ENCODE measurements at regions of chr2 and their contacts with region 1.

Region 1: GRCh38 chr2:240851078-240851991 is 17.3 kb upstream of the AGXT start:
- DNase-seq: peak; percentile 94
- ATAC-seq: peak; percentile 99
- H3K4me3 Mint-ChIP-seq: no peak overlapping the region
- H3K27ac Mint-ChIP-seq: 0 out of 2 replicates have a peak overlapping the region, but pooled peaks have one; percentile 53
- H3K4me1 Mint-ChIP-seq: peaks cover 10% of the 10 kb centered on the region
- H3K27me3 Mint-ChIP-seq: no peaks in the 10 kb centered on the region; the same call in none of the 2 replicates
- CTCF ChIP-seq: peak; percentile 89

Region 2: DNA sequence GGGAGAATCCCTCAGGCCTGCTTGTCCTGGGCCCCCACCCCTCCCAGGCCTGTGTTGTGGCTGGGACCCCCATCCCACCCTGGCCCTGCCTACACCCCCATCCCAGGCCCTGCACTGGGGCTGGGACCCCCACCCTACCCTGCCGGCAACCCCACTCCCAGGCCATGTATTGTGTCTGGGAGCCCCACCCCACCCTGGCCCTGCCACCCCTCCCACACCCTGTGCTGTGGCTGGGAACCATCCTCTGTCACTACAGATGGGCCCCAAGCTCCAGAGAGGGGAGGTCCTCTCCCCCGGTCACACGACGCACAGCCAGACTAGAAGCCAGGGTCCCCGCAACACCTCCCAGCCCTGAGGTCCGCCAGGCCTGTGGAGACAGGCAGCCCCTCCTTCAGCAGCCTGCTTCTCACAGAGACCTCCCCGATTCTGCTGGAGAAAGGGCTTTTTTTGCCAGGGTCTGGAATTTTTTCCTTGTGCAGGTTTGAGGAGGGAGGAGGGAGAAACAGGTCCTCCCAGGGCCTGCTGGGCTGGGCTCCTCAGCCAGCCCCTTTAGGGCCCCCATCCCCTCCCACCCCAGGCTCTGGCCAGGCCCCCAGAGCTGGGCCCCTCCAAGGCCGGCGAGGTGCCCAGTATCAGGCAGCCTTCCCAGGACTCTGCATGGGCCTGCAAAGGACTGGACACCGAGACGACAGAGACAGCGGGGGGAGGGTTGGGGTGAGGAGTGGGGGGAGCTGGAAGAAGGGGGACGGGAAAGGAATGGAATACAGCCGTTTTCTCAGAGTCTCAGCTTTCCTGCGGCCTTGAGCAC is 59.3 kb before region 1 on chr2:
- CTCF ChIA-PET with region 1: no interaction called
- POLR2A ChIA-PET with region 1: no interaction called
- DNase-seq: no peak
- ATAC-seq: no peak
- H3K4me3 Mint-ChIP-seq: no peak overlapping the region
- H3K27ac Mint-ChIP-seq: peak overlapping the region; percentile 88; the same call in 1 of the 2 replicates
- H3K4me1 Mint-ChIP-seq: peaks cover 13% of the 10 kb centered on the region
- H3K27me3 Mint-ChIP-seq: no peaks in the 10 kb centered on the region
- CTCF ChIP-seq: no peak

Region 3: DNA sequence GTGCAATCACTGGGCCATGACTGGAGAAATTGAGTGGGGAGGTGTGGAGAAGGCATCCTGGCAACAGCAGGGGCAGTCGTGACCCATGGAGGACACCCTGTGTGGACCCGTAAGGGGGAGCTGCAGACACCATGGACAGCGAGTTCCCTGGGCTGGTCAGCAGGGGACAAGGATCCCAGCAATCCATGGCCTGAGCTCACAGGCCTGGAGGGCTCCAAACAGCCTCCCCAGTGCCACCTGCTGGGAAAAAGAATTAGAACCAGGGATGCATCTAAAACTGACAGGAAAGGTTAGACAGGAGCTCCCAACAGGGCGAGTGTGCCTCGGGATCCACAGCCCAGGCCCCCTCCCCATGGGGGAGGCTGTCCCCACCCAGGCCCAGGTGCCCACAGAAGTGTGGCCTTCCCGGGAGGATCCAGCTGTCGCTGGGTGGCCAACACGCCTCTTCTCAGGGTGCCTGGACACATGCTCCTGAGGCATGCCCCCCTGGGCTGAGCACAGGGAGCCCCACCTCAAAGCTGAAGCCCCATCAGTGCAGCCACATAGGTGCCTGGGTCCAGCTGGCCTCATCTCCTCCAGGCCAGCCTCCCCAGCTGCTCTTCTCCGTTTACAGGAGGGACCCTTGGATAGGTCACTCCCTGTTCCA is 10.8 kb before region 1 on chr2:
- CTCF ChIA-PET with region 1: interaction called, 31 read pairs
- POLR2A ChIA-PET with region 1: no interaction called
- DNase-seq: peak; percentile 68
- ATAC-seq: peak; percentile 84
- H3K4me3 Mint-ChIP-seq: no peak overlapping the region
- H3K27ac Mint-ChIP-seq: no peak overlapping the region
- H3K4me1 Mint-ChIP-seq: peaks cover 20% of the 10 kb centered on the region
- H3K27me3 Mint-ChIP-seq: peaks cover 7% of the 10 kb centered on the region
- CTCF ChIP-seq: no peak

Region 4: DNA sequence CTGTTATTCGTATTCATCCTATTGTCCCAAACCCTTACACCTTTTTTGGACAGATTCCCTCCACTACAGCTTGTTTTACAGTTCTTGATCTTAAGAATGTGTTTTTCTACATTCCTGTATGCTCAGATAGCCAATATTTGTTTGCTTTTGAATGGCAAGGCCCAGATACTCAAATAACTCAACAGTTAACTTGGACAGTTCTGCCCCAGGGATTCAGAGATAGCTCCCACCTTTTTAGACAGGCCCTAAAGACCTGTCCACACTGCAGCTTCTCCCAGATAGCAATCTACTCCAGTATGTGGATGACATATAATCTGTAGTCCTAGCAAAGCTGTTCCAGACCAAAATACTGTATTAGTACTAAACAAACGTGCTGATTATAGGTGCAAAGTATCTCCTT is 10.2 kb after region 1 on chr2:
- CTCF ChIA-PET with region 1: interaction called, 16 read pairs
- POLR2A ChIA-PET with region 1: no interaction called
- DNase-seq: no peak
- ATAC-seq: no peak
- H3K4me3 Mint-ChIP-seq: no peak overlapping the region
- H3K27ac Mint-ChIP-seq: no peak overlapping the region
- H3K4me1 Mint-ChIP-seq: no peaks in the 10 kb centered on the region
- H3K27me3 Mint-ChIP-seq: no peaks in the 10 kb centered on the region; the same call in 1 of the 2 replicates
- CTCF ChIP-seq: no peak

Region 5: GRCh38 chr2:240898108-240898730 is 46.9 kb after region 1 on chr2:
- CTCF ChIA-PET with region 1: interaction called, 11 read pairs
- POLR2A ChIA-PET with region 1: no interaction called
- DNase-seq: no peak
- ATAC-seq: no peak
- H3K4me3 Mint-ChIP-seq: no peak overlapping the region
- H3K27ac Mint-ChIP-seq: no peak overlapping the region
- H3K4me1 Mint-ChIP-seq: no peaks in the 10 kb centered on the region
- H3K27me3 Mint-ChIP-seq: no peaks in the 10 kb centered on the region
- CTCF ChIP-seq: no peak

Region 6: DNA sequence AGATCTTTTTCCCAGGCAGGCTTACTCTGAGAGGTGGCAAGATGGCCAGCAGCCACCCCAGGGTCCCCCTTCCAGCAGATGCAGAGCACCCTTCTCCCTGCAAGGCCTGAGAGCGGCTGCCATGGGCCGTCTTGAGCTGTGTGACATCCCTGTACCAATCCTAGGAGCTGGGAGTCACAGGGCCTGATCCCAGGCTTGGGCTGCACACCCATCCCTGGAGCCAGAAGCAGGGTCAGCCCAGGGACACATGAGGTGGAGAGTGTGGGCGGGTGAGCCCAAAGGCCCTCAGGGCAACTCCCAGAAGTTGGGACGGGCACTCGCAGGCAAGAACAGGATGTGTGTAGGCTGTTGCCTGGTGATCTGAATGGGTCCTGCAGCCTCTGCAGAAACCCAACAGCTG is 95.3 kb after region 1 on chr2:
- CTCF ChIA-PET with region 1: interaction called, 10 read pairs
- POLR2A ChIA-PET with region 1: no interaction called
- DNase-seq: no peak
- ATAC-seq: no peak
- H3K4me3 Mint-ChIP-seq: no peak overlapping the region
- H3K27ac Mint-ChIP-seq: no peak overlapping the region
- H3K4me1 Mint-ChIP-seq: no peaks in the 10 kb centered on the region
- H3K27me3 Mint-ChIP-seq: no peaks in the 10 kb centered on the region
- CTCF ChIP-seq: no peak

Region 7: DNA sequence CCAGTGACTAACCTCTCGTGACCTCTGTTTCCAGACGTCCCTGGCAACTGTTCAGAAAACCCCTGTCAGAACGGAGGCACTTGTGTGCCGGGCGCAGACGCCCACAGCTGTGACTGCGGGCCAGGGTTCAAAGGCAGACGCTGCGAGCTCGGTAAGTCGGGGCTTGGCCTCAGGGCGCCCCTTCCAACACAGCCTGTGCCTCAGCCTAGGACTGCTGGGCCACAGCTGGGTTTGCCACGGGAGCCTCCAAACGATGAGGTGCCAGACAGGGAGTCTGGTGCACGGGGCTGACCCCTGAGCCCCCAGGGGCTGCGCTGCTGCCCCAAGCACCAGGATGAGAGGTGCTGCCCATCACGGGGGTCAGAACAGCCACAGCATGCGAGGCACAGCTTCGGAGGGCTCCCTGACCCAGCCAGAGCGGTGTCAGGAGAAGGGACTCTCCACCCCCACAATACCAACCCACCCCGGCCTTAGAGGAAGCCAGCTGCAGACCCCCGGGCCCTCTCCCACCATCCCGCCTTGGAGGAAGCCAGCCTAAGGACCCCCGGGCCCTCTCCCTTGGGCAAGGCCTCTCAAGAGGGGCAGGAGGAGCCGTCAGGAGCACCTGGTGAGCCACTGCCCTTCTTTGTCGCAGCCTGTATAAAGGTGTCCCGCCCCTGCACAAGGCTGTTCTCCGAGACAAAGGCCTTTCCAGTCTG is 230.5 kb after region 1 on chr2:
- CTCF ChIA-PET with region 1: interaction called, 15 read pairs
- POLR2A ChIA-PET with region 1: no interaction called
- DNase-seq: no peak
- ATAC-seq: no peak
- H3K4me3 Mint-ChIP-seq: no peak overlapping the region
- H3K27ac Mint-ChIP-seq: no peak overlapping the region
- H3K4me1 Mint-ChIP-seq: no peaks in the 10 kb centered on the region
- H3K27me3 Mint-ChIP-seq: no peaks in the 10 kb centered on the region
- CTCF ChIP-seq: no peak